ENCODE measurements at regions of chr18 and their contacts with region 1.

Region 1: DNA sequence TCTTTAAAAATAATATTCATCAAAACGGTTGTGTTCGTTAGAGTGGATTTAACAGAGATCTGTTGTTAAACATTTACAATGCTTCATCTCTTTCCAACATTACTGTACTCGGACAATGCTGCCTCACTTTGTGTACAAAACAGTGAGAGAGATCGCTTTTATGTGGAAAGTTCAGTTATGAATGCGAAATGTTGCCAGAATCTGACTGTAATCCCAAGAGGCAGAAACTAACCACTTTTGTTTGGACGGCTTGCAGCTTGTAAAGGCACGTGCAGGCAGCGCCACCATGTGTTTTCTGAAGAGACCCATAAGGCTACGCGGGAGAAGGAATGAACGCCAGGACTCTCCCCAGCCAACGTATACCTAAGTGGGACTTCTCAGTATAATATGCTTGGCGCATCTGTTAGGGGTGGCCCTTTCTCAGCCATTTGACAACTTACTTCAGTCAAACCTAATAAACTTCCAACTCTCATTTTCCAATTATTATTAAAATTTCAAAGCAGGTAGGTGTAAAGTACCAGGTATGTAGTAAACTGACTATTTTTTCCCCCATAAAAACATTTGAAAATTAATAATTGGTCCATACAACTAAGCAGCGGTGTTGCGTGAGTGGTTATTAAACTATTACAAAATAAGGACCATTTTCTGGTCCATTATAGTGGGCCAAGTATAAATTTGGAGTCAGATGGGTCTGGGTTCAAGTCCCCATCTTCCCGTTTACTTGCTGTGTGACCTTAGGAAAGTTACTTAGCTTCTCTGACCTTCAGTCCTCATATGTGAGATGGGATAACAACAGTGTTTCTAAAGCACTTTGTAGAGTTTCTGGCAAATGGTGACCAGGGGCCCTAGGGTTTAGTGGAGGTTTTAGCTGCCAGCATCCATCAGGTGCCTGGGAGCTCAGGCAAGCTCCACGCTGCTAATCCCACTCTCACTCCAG is 5.6 kb upstream of the NAPG start:
- DNase-seq: peak; percentile 87
- H3K4me3 ChIP-seq: no peak overlapping the region
- H3K27ac ChIP-seq: no peak overlapping the region
- H3K27me3 ChIP-seq: peaks cover 7% of the 10 kb centered on the region
- CTCF ChIP-seq: peak; percentile 90

Region 2: GRCh38 chr18:9971313-9971920 is 548.9 kb before region 1 on chr18:
- in situ Hi-C with region 1: loop called (anchors 10 kb)
- DNase-seq: peak; percentile 79
- H3K4me3 ChIP-seq: no peak overlapping the region
- H3K27ac ChIP-seq: no peak overlapping the region
- H3K27me3 ChIP-seq: peaks cover 3% of the 10 kb centered on the region
- CTCF ChIP-seq: peak; percentile 73